ENCODE measurements at regions of chr2 and their contacts with region 1.

Region 1: DNA sequence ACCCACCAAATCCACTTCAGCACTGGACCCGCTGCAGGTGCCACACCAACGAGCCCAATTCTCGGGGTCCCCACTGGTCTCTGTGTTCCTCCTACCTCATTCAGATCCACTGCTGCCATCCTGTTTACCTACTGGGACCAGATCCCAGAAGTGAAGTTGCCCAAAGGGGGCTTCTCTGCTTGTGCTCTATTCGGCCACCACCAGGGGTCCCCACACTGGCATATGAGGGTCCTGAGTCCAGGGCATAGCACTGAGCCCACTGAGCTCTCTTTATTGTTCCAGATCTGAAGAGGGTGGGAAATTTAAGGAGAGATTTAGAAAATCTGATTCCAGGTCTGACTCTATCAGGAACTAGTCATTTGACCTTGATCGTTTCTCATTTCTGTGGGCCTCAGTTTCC is 2.4 kb downstream of the GPR45 start:
- DNase-seq: no peak
- H3K4me3 ChIP-seq: no peak overlapping the region
- H3K27ac ChIP-seq: no peak overlapping the region
- H3K27me3 ChIP-seq: no peaks in the 10 kb centered on the region
- CTCF ChIP-seq: peak in 2 of 56 donors; percentile 7 to 17

Region 2: DNA sequence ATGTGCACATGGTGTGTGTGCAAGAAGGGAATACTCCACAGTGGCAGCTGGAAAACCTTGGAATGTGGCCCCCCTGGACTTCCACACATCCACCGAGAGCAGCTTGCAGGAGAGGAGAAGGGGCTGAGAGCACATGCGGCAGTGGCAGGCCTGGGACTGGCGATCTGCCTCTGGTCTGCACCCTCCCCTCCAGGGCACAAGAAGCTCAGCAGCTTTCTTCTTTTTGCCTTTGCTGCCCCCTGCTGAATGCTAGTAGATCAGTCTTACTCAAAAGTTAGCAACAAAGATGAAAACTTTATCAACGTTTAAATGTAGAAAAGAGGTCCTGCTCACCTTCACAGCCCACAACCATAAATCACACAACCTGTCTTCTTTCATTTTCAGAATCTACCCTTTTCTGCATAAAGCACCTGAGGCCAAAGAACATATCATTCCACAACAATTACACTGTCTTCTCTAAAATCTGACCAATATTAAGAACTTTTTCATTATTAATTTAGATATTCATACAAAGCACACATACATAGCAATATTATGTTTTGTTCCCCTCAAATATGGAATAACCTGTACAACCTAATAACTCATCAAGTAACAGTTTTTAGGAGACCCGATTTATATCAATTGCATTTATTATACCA is 51.0 kb after region 1 on chr2:
- intact Hi-C with region 1: loop called in 1 of 2 experiments (anchors 5 kb)
- DNase-seq: peak; percentile 38 to 74 (median 71)
- H3K4me3 ChIP-seq: no peak overlapping the region
- H3K27ac ChIP-seq: peak overlapping the region in 21 of 59 donors; percentile 1 to 68 (median 44)
- H3K27me3 ChIP-seq: no peaks in the 10 kb centered on the region
- CTCF ChIP-seq: peak; percentile 45 to 86 (median 70)